ENCODE measurements at regions of chr3 and their contacts with region 1.

Region 1: GRCh38 chr3:135895106-135895733 is 70.3 kb upstream of the PPP2R3A start:
- DNase-seq: peak in 1 of 2 donors; percentile 65
- H3K4me3 ChIP-seq: no peak overlapping the region
- H3K27ac ChIP-seq: no peak overlapping the region
- H3K4me1 ChIP-seq: no peaks in the 10 kb centered on the region
- H3K27me3 ChIP-seq: no peaks in the 10 kb centered on the region
- CTCF ChIP-seq: peak; percentile 25 to 77 (median 52)

Region 2: DNA sequence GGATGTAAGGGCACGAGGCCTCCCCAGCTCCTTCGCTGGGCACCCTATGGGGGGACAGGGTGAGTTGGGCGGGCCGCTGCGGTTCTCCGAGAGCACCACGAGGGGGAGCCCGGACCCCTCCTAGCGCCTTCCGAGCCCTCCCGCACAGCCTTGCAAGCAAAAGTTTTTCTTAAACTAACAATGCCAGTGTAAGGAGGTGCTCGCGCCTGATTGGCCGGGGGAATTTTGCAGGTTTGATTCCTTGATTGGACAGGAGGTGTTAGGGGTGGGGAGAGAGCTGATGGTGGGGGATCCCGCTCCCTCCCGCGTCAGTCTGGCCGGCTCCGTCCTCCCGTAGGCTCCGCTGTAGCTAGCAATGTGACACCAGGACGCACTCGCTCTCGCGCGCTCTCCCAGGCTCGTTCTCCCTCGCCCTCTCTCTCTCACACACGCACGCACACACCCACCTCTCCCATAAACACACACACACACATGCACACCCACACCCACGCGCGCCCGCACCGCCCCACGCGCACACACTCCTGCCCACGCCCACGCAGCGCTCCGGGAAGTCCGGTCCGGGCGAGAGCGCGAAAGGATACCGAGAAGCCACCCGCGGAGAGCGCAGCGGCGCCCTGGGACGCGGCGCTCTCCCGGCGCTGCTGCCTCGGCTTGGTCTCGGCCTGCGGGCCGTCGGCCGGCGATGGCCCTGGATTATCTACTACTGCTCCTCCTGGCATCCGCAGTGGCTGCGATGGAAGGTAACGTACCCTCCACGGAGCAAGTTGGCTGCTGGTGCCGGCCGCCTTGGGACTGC is 1100.1 kb before region 1 on chr3 and contains the start of gene EPHB1:
- intact Hi-C with region 1: loop called (anchors 5 kb)
- DNase-seq: peak; percentile 38 to 87
- H3K4me3 ChIP-seq: peak within 1 kb of the TSS; percentile 44 to 84
- H3K27ac ChIP-seq: no peak within 1 kb of the TSS
- H3K4me1 ChIP-seq: peaks cover 0 to 3% of the 10 kb centered on the region in 2 donors
- H3K27me3 ChIP-seq: no peaks in the 10 kb centered on the region
- CTCF ChIP-seq: peak; percentile 68 to 92 (median 84)
- total RNA-seq, gene EPHB1: 0.53 TPM

Region 3: GRCh38 chr3:134838599-134838998 is 1056.6 kb before region 1 on chr3:
- intact Hi-C with region 1: no loop called
- DNase-seq: peak in 1 of 2 donors; percentile 8
- H3K4me3 ChIP-seq: no peak overlapping the region
- H3K27ac ChIP-seq: no peak overlapping the region
- H3K4me1 ChIP-seq: no peaks in the 10 kb centered on the region
- H3K27me3 ChIP-seq: no peaks in the 10 kb centered on the region
- CTCF ChIP-seq: no peak

Region 4: DNA sequence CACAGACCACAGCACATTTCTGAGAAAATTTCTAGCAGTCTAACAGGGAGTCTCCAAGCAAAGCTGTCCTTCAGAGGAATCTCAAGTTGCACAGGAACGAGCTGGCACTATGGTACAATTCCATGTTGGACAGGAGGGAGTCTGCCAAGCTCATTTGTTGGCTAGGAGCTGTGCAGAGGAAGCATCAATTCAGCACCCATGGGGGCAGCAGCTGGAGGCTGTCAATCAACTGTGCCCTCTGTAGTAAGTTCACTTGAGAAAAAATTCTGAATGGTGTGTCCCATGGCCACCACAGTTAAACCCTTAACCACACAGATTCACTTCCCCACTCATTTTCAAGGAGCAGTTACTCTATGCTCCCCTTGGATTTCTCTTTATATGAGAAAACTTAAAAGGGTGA is 228.2 kb before region 1 on chr3:
- intact Hi-C with region 1: no loop called
- DNase-seq: no peak
- H3K4me3 ChIP-seq: no peak overlapping the region
- H3K27ac ChIP-seq: no peak overlapping the region
- H3K4me1 ChIP-seq: no peaks in the 10 kb centered on the region
- H3K27me3 ChIP-seq: no peaks in the 10 kb centered on the region
- CTCF ChIP-seq: no peak

Region 5: GRCh38 chr3:135779590-135780235 is 115.5 kb before region 1 on chr3:
- intact Hi-C with region 1: no loop called
- DNase-seq: no peak
- H3K4me3 ChIP-seq: no peak overlapping the region
- H3K27ac ChIP-seq: no peak overlapping the region
- H3K4me1 ChIP-seq: no peaks in the 10 kb centered on the region
- H3K27me3 ChIP-seq: no peaks in the 10 kb centered on the region
- CTCF ChIP-seq: no peak

Region 6: GRCh38 chr3:136283627-136284026 is 388.4 kb after region 1 on chr3:
- intact Hi-C with region 1: no loop called
- DNase-seq: no peak
- H3K4me3 ChIP-seq: no peak overlapping the region
- H3K27ac ChIP-seq: no peak overlapping the region
- H3K4me1 ChIP-seq: no peaks in the 10 kb centered on the region
- H3K27me3 ChIP-seq: no peaks in the 10 kb centered on the region
- CTCF ChIP-seq: no peak